Thyroid gland (tissue), 4 donors: ENCODE measurements at regions of chr22 and their contacts with region 1.

Region 1: DNA sequence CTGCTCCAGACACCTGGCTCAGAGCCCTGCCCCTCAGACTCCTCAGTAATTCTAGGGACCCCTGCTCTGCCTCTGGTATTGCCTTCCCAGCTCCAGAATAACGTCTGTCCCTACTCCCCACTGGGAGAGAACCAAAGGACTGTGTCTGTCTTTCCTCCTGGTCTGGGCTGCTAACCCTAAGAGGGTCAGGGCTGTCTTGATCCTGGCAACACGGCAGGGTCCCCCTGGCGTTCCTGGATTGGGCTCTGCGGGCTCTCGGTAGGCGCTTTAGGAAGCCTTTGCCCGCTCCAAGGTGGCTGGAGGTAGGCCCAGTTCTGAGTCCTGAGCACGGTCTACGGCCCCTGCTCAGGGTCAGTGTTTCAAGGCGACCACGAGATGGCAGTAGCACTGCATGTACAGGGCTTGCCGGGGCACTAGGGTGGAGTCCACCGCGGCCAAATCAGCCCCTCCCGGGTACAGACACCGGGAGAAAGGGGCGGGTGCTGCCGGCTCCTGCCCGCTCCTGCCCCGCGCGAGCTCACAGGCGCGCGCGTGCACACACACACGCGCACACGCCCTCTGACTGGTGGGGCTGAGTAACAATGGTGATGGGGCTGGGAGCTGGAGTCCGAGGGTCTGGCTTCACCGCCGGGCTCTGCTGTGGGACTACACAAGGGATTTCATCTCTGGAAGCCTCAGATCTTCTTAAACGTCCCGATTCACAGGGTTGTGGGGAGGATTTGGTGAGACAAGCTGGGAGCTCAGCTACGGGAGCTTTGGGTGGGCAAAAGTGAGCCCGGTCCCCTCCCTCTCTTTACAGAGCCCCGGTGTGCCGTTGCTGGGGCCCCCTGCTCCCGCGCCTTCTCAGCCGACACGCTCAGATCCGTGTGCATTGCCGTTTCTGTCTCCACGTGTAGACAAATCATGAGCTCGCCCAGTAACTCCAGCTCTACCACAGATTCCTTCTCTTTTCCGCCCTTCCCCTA is 30.1 kb upstream of the HMOX1 start:
- DNase-seq: peak; percentile 94 to 95
- H3K4me3 ChIP-seq: peak overlapping the region in 2 of 3 donors; percentile 47 to 56
- H3K27ac ChIP-seq: peak overlapping the region; percentile 52 to 84 (median 82)
- H3K4me1 ChIP-seq: peaks cover 15 to 28% of the 10 kb centered on the region in 2 donors
- H3K27me3 ChIP-seq: no peaks in the 10 kb centered on the region
- CTCF ChIP-seq: peak; percentile 73 to 99 (median 92)
- POLR2A ChIP-seq: no peak

Region 2: DNA sequence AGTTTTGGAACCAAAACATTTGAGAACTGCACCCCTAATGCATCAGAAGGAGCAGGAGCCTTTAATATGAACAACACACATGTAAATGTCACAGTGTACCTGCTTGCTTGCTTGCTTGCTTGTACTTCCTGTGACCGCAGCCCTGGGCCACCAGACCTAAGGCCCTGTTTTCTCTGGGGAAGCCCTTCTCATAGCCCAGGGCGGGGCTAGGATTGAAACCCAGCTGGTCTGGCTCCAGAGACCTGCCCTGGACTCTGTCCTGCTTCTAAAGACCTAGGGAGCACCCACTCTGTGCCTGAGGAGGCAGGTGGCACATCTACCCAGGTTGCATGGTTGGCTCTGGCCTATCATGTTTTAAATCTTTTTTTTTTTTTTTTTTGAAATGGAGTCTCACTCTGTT is 41.5 kb after region 1 on chr22:
- intact Hi-C with region 1: no loop called
- DNase-seq: no peak
- H3K4me3 ChIP-seq: no peak overlapping the region
- H3K27ac ChIP-seq: no peak overlapping the region
- H3K4me1 ChIP-seq: peaks cover 10 to 26% of the 10 kb centered on the region in 2 donors
- H3K27me3 ChIP-seq: no peaks in the 10 kb centered on the region
- CTCF ChIP-seq: no peak
- POLR2A ChIP-seq: no peak

Region 3: DNA sequence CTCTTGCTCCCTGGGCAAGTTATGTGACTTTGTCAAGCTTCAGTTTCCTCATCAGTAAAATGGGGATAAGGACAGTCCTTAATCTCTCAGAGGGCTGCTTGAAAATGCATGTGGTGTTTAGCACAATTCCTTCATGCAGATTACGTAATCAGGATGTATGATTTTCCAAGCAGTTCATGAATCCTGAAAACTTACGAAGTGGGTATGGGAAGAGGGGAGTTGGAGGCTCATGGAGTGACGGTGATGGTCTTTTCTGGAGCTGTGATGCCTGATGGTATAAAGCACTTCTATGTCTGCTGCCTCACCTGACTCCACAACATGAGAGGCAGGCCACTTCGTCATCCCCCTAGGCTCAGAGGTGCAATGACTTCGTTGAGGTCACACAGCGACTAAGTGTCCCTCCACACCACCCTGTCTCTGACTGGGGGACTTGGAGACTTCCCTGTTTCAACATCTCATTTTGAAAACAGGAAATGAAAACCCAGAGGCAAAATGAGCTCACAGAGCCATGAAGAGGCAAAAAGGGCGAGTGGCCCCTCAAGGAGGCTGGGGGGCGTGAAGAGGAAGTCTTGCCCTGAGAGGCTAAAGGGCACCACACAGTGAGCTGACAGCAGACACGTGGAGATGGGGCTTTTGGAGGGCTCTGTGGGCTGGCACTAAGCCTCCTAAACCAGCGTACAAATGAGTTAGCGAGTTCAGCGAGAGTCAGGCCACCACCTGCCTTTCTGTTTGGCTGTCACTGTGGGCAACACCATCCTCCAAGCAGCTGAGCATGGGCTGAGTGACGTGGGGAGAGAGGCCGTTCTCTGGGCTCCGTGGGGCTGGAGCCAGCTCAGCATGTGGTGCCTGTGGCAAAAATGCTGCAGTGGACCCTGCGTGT is 59.2 kb after region 1 on chr22:
- intact Hi-C with region 1: no loop called
- DNase-seq: no peak
- H3K4me3 ChIP-seq: no peak overlapping the region
- H3K27ac ChIP-seq: no peak overlapping the region
- H3K4me1 ChIP-seq: no peaks in the 10 kb centered on the region
- H3K27me3 ChIP-seq: no peaks in the 10 kb centered on the region
- CTCF ChIP-seq: no peak
- POLR2A ChIP-seq: no peak

Region 4: DNA sequence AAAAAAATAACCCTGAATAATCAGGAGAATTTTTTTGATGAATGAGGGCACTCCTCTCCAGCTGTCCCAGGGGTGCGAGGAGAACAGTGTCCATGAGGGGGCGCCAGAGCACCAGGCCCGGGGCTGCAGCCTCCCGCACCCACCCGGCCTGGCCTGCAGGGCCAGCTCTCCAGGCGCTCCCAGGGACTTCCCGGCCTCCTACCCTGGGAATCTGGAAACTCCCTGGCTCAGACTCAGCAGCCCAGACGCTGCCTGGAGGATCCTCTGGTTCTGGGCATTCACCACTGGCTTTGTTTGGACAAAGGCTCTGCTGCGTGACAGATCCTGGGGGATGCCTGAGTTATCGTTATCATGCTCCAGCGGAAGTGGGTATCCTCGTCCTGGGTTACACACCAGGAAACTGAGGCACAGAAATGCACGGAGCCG is 80.1 kb after region 1 on chr22:
- intact Hi-C with region 1: loop called (anchors 10 kb)
- DNase-seq: peak; percentile 88 to 93
- H3K4me3 ChIP-seq: no peak overlapping the region
- H3K27ac ChIP-seq: peak overlapping the region in 1 of 3 donors; percentile 39
- H3K4me1 ChIP-seq: peaks cover 17 to 27% of the 10 kb centered on the region in 2 donors
- H3K27me3 ChIP-seq: no peaks in the 10 kb centered on the region
- CTCF ChIP-seq: peak; percentile 94 to 99 (median 98)
- POLR2A ChIP-seq: no peak

Region 5: DNA sequence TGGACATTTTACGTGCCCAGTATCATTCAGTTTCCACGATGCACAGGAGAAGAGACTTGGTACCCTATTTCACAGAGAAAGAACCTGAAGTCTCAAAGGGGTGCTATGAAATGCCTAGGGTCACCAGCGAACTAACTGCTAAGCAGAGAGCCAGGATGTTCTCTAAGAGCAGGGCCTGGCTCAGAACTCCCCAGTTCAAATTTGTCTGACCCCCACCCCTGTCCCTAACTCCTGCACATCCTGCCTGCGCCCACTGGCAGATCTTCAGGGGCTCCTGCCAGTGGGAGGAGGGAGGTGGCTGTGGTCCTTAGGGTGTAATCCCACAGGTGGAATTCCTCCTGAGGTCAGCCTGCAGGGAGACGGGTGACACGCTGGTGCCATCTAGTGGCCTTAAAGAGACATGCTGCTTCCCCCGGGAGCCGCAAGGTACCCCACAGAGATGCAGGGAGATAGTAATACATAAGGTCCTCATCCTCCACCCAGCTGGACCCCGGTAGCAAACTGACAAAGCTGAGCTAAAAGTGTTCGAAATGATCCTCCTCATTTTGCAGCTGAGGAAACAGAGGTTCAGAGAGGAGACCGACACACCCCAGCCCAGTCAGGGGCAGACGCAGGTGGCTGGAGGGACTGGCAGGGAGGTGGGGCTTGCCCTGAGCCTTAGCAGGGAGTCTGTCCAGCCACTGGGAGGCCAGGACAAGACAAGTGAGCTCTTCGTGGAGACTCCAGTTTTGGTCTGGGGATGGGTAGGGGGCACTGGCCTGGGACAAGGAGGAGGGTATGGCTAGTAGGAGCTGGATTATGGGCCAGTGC is 232.2 kb after region 1 on chr22:
- intact Hi-C with region 1: loop called (anchors 2 kb)
- DNase-seq: peak; percentile 58 to 61
- H3K4me3 ChIP-seq: no peak overlapping the region
- H3K27ac ChIP-seq: no peak overlapping the region
- H3K4me1 ChIP-seq: peaks cover 10 to 14% of the 10 kb centered on the region in 2 donors
- H3K27me3 ChIP-seq: no peaks in the 10 kb centered on the region
- CTCF ChIP-seq: peak; percentile 82 to 97 (median 89)
- POLR2A ChIP-seq: no peak

Region 6: GRCh38 chr22:35622191-35622913 is 271.5 kb after region 1 on chr22:
- intact Hi-C with region 1: loop called (anchors 5 kb)
- DNase-seq: peak; percentile 74
- H3K4me3 ChIP-seq: no peak overlapping the region
- H3K27ac ChIP-seq: peak overlapping the region; percentile 47 to 58 (median 57)
- H3K4me1 ChIP-seq: peaks cover 22 to 23% of the 10 kb centered on the region in 2 donors
- H3K27me3 ChIP-seq: no peaks in the 10 kb centered on the region
- CTCF ChIP-seq: no peak
- POLR2A ChIP-seq: no peak